Colonic mucosa (tissue), 4 donors: ENCODE measurements at regions of chr21 and their contacts with region 1.

Region 1: GRCh38 chr21:38805328-38806152 is at the start of gene ETS2:
- DNase-seq: peak; percentile 94
- H3K4me3 ChIP-seq: peak within 1 kb of the TSS; percentile 83
- H3K27ac ChIP-seq: peak within 1 kb of the TSS; percentile 95
- H3K4me1 ChIP-seq: no peaks in the 10 kb centered on the region
- H3K27me3 ChIP-seq: no peaks in the 10 kb centered on the region
- CTCF ChIP-seq: no peak
- total RNA-seq, gene ETS2: 110 to 185 TPM

Region 2: DNA sequence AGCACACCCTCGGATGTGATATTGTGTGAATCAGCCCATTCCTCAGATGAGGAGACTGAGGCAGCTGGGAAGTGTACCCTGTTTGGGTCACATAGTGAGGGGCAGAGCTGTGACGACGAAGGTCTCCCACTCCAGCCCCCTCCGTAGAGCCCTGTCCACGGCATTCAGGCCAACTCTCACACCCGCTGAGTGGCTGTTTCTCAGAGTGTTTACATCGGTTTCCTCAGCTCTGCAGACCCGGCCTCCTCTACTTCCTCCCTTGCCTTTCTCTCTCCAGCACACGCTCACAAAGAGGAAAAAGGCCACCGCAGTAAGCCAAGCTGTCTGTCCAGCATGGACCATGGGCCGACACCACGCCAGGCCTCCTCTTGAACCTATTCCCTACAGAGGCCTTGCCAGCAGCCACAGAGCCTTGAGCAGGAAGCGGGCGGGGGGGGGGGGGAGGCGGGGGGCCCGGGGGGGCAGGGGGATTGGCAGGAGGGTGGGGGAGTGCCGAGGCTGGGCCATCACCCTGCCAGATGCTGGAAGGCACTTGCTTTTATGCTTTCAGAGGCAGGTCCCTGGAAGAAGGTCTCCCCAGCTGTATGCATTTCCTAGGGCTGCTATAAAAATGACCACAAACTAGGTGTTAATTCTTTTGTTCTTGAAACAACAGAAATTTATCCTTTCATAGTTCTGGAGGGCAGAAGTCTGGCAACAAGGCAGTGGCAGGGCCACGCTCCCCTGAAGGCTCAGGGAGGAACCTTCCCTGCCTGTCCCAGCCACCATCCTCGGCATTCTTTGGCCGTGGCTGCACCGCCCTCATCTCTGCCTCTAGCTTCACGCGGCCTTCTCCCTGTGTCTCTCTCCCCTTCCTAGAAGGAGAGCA is 199.3 kb after region 1 on chr21:
- intact Hi-C with region 1: loop called (anchors 10 kb)
- DNase-seq: peak; percentile 56
- H3K4me3 ChIP-seq: no peak overlapping the region
- H3K27ac ChIP-seq: peak overlapping the region; percentile 71
- H3K4me1 ChIP-seq: peaks cover 17% of the 10 kb centered on the region
- H3K27me3 ChIP-seq: no peaks in the 10 kb centered on the region
- CTCF ChIP-seq: no peak